ENCODE measurements at regions of chr15 and their contacts with region 1.

Region 1: DNA sequence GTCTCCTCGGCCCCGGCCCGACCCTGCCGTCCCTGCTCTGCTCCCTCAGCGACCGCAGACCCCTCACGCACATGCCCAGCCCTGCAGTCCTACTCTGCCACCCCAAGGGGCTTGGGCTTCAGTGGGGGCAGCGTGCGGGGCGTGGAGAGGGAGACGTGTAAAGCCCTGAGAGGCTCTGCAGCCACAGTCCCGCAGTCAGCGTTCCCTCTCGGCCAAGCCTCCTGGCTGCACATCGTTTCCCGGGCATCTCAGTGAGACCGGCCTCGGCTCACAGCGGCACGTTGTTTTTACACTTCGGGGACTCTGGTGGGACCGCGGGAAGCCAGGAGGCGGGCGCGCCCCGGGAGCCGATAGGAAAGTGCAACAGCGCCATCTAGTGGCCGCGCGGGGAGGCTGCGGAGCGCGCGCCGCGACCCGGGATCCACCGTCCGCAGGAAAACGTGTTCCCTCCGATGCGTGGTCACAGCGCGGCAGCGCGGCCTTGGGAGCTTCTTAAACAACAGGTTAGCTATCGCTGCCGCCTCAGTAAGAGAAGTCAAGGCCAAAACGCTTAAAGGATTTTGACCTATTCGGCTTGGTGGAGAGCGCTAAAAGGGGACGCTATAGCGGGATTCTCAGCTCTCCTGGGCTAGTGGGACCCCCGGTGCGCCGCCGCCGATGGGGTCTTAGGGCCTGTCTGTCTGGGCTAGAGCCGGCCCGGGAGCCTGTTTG is 226.8 kb upstream of the IGF1R start:
- DNase-seq: peak; percentile 10
- ATAC-seq: peak; percentile 89
- H3K4me3 ChIP-seq: no peak overlapping the region
- H3K27ac ChIP-seq: no peak overlapping the region
- H3K4me1 ChIP-seq: peaks cover 0 to 4% of the 10 kb centered on the region in 2 experiments; a peak in 1 of 4 replicates
- H3K27me3 ChIP-seq: peaks cover 10% of the 10 kb centered on the region; the same call in 1 of the 2 replicates
- CTCF ChIP-seq: peak; percentile 65 to 92 (median 90)
- POLR2A ChIP-seq: no peak
- RAD21 ChIP-seq: peak; percentile 90

Region 2: GRCh38 chr15:97903971-97904572 is 517.5 kb before region 1 on chr15:
- CTCF ChIA-PET with region 1: no interaction called
- POLR2A ChIA-PET with region 1: no interaction called
- RAD21 ChIA-PET with region 1: no interaction called
- intact Hi-C with region 1: loop called (anchors 2 kb)
- DNase-seq: peak; percentile 41
- ATAC-seq: peak; percentile 100
- H3K4me3 ChIP-seq: no peak overlapping the region
- H3K27ac ChIP-seq: no peak overlapping the region
- H3K4me1 ChIP-seq: peaks cover 0 to 3% of the 10 kb centered on the region in 2 experiments; a peak in 2 of 4 replicates
- H3K27me3 ChIP-seq: peaks cover 7% of the 10 kb centered on the region
- CTCF ChIP-seq: peak; percentile 70 to 76 (median 75)
- POLR2A ChIP-seq: no peak
- RAD21 ChIP-seq: peak; percentile 80

Region 3: DNA sequence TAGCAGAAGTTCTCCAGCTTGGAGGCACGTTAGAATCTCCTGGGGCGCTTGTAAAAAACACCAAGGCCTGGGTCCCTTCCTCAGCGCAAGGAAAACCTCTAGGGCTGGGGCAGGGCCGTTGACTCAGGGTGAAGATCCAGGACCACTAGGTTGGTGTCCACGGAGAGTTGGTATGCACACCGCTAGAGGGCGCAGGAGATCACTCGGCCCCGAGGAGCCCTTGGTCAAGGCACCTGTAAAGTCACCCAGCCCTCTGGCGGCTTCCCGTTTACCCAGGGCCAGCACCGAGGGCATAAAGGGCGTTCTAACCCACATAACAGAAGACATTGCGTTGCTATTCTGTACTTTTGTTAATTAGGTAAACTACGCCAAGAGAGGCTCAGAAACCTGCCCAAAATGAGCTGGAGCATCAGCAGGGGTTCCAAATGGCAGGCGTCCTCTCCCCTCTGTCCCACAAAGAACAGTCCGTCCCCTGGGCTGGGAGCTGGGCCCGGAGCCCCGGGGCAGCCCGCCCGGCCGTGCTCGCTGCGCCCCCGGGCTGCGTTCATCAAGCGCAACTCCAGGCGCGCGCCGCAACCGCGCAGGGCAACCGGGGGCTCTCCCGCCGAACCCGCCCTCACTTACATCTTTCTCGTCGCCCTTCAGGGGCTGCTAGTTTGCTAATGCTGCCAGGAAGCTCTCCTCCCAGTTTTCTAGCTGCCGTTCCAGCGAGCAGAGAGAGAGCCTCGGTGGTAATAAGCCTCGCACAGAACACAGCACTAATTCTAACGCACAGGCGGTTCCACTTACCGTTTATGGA is 128.9 kb before region 1 on chr15:
- CTCF ChIA-PET with region 1: interaction called, 4 read pairs
- POLR2A ChIA-PET with region 1: no interaction called
- RAD21 ChIA-PET with region 1: no interaction called
- intact Hi-C with region 1: loop called (anchors 5 kb)
- DNase-seq: peak; percentile 21
- ATAC-seq: peak; percentile 97
- H3K4me3 ChIP-seq: no peak overlapping the region
- H3K27ac ChIP-seq: no peak overlapping the region
- H3K4me1 ChIP-seq: no peaks in the 10 kb centered on the region
- H3K27me3 ChIP-seq: peaks cover 15% of the 10 kb centered on the region; the same call in 1 of the 2 replicates
- CTCF ChIP-seq: peak; percentile 60 to 89 (median 84)
- POLR2A ChIP-seq: no peak
- RAD21 ChIP-seq: peak; percentile 43

Region 4: GRCh38 chr15:98311566-98312188 is 109.9 kb before region 1 on chr15:
- CTCF ChIA-PET with region 1: interaction called, 30 read pairs
- POLR2A ChIA-PET with region 1: no interaction called
- RAD21 ChIA-PET with region 1: interaction called in 1 of 2 experiments, 3 read pairs
- intact Hi-C with region 1: loop called (anchors 1 kb)
- DNase-seq: peak; percentile 48
- ATAC-seq: peak; percentile 77
- H3K4me3 ChIP-seq: no peak overlapping the region
- H3K27ac ChIP-seq: no peak overlapping the region
- H3K4me1 ChIP-seq: no peaks in the 10 kb centered on the region
- H3K27me3 ChIP-seq: peaks cover 9% of the 10 kb centered on the region
- CTCF ChIP-seq: peak; percentile 64 to 84 (median 64); a peak in 5 of 6 replicates
- POLR2A ChIP-seq: no peak
- RAD21 ChIP-seq: peak; percentile 64

Region 5: DNA sequence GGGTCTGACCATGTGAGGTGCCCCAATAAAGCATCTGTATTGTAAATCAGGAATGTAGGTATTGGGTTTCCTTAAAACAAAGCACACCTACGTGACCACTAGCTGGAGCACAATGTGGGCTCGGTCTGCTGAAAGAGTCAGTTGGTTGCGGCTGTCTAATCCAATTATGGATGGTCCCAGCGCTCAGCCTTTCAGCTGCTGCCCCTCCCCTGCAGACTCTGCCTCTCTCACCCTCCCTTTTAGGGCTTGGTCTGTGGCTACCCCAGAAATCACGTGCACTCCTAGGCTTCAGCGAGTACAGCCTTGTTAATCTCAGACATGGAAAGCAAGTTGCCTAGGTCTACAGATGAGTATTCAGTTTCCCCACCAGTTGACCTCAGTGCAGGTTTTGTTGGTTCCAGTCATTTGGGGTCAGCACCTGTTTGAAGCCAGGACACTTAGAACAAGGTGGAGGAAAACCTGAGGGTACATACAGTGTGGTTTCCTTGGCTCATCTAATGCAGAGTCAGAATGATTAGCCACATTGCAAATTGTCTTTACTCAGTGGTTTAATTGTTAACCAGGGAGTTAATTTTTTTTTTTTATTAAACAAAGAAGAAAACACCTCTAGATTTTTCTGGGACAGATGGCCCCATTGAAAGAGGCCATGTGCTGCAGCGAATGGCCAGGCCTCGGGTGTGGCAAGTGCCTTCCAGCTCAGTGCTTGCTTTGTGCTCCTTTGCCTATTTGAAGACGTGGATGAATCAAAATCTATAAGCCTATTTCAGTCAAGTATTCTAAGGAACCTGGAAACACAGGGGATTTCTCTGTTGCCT is 364.4 kb after region 1 on chr15:
- CTCF ChIA-PET with region 1: no interaction called
- POLR2A ChIA-PET with region 1: no interaction called
- RAD21 ChIA-PET with region 1: no interaction called
- intact Hi-C with region 1: no loop called
- DNase-seq: no peak
- ATAC-seq: no peak
- H3K4me3 ChIP-seq: no peak overlapping the region
- H3K27ac ChIP-seq: no peak overlapping the region
- H3K4me1 ChIP-seq: peaks cover 0 to 6% of the 10 kb centered on the region in 2 experiments; a peak in 1 of 4 replicates
- H3K27me3 ChIP-seq: no peaks in the 10 kb centered on the region
- CTCF ChIP-seq: no peak
- POLR2A ChIP-seq: no peak
- RAD21 ChIP-seq: no peak

Measured in HCT116 (cell line).